Caco-2 (cell line): ENCODE measurements at regions of chr19 and their contacts with region 1.

Region 1: GRCh38 chr19:14571695-14572490 is at the start of gene NDUFB7:
- DNase-seq: peak; percentile 93
- H3K4me3 ChIP-seq: peak within 1 kb of the TSS; percentile 92
- H3K4me3 Mint-ChIP-seq: peak within 1 kb of the TSS; percentile 88
- H3K27ac Mint-ChIP-seq: peak within 1 kb of the TSS; percentile 92
- H3K4me1 ChIP-seq: no peaks in the 10 kb centered on the region
- H3K4me1 Mint-ChIP-seq: peaks cover 9% of the 10 kb centered on the region
- H3K27me3 ChIP-seq: no peaks in the 10 kb centered on the region
- H3K27me3 Mint-ChIP-seq: no peaks in the 10 kb centered on the region
- CTCF ChIP-seq: peak; percentile 39 to 87
- total RNA-seq, gene NDUFB7: 158 and 173 TPM in 2 replicates

Region 2: GRCh38 chr19:14318873-14319272 is 253.0 kb before region 1 on chr19:
- CTCF ChIA-PET with region 1: no interaction called
- POLR2A ChIA-PET with region 1: no interaction called
- intact Hi-C with region 1: no loop called
- DNase-seq: peak in 1 of 2 experiments; percentile 12
- H3K4me3 ChIP-seq: no peak overlapping the region
- H3K4me3 Mint-ChIP-seq: no peak overlapping the region
- H3K27ac Mint-ChIP-seq: no peak overlapping the region
- H3K4me1 ChIP-seq: no peaks in the 10 kb centered on the region
- H3K4me1 Mint-ChIP-seq: no peaks in the 10 kb centered on the region
- H3K27me3 ChIP-seq: no peaks in the 10 kb centered on the region
- H3K27me3 Mint-ChIP-seq: no peaks in the 10 kb centered on the region
- CTCF ChIP-seq: no peak

Region 3: GRCh38 chr19:14686411-14686810 is 114.5 kb after region 1 on chr19:
- CTCF ChIA-PET with region 1: interaction called, 50 read pairs
- POLR2A ChIA-PET with region 1: interaction called, 6 read pairs
- intact Hi-C with region 1: loop called (anchors 1 kb)
- DNase-seq: peak in 1 of 2 experiments; percentile 9
- H3K4me3 ChIP-seq: no peak overlapping the region
- H3K4me3 Mint-ChIP-seq: no peak overlapping the region
- H3K27ac Mint-ChIP-seq: no peak overlapping the region
- H3K4me1 ChIP-seq: peaks cover 4% of the 10 kb centered on the region; the same call in 1 of the 2 replicates
- H3K4me1 Mint-ChIP-seq: no peaks in the 10 kb centered on the region
- H3K27me3 ChIP-seq: no peaks in the 10 kb centered on the region
- H3K27me3 Mint-ChIP-seq: peaks cover 8% of the 10 kb centered on the region
- CTCF ChIP-seq: peak in 1 of 2 experiments; percentile 31

Region 4: DNA sequence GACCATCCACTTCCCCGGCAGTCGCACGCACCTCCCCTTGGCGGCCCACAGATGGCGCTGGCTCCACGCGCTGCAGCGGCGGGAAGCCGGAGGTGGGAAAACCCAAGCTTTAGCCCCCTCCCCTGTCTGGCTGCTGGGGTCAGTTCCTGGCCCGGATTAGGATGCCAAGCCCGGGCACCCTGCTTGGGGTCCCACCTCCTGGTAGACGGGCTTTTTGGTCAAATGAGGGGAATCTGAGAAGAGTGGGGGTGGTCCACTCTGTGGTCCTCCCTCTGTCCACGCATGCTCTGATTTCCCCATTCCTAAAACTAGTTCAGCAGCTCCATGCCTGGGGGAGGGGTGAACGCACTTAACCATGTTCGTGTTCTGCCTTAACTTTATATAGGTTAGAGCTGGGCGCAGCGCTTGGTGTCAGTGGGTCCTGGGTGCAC is 214.5 kb after region 1 on chr19:
- CTCF ChIA-PET with region 1: no interaction called
- POLR2A ChIA-PET with region 1: no interaction called
- intact Hi-C with region 1: loop called (anchors 10 kb)
- DNase-seq: peak in 1 of 2 experiments; percentile 3
- H3K4me3 ChIP-seq: no peak overlapping the region
- H3K4me3 Mint-ChIP-seq: no peak overlapping the region
- H3K27ac Mint-ChIP-seq: no peak overlapping the region
- H3K4me1 ChIP-seq: no peaks in the 10 kb centered on the region
- H3K4me1 Mint-ChIP-seq: no peaks in the 10 kb centered on the region
- H3K27me3 ChIP-seq: no peaks in the 10 kb centered on the region
- H3K27me3 Mint-ChIP-seq: no peaks in the 10 kb centered on the region
- CTCF ChIP-seq: peak; percentile 11 to 40